Heart right ventricle (tissue), 16 donors: ENCODE measurements at regions of chr16 and their contacts with region 1.

Region 1: DNA sequence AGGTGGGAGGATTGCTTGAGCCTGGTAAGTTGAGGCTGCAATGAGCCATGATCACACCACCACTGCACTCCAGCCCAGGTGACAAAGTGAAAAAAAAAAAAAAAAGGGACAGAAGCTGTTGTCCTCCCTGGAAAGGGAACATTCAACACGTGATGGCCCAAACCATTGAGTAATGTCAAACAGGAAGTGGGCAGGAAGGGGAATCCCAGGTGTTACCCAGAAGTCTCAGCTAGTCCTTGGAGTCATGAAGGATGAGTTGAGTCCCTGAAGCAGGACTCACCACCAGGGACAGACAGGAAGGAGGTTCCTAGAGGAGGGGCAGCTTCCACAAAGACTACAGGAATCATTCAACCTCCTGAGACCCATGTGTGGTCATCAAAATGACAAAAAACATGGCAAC is 19.8 kb upstream of the CMIP start:
- DNase-seq: no peak
- ATAC-seq: no peak
- H3K4me3 ChIP-seq: no peak overlapping the region
- H3K27ac ChIP-seq: no peak overlapping the region
- H3K4me1 ChIP-seq: peaks cover 0 to 16% (median 0%) of the 10 kb centered on the region in 9 donors
- H3K27me3 ChIP-seq: no peaks in the 10 kb centered on the region
- CTCF ChIP-seq: no peak

Region 2: GRCh38 chr16:80718249-80719220 is 706.2 kb before region 1 on chr16:
- intact Hi-C with region 1: no loop called
- DNase-seq: no peak
- ATAC-seq: peak in 2 of 8 donors; percentile 26 to 27
- H3K4me3 ChIP-seq: no peak overlapping the region
- H3K27ac ChIP-seq: no peak overlapping the region
- H3K4me1 ChIP-seq: peaks cover 0 to 11% (median 0%) of the 10 kb centered on the region in 9 donors
- H3K27me3 ChIP-seq: no peaks in the 10 kb centered on the region
- CTCF ChIP-seq: no peak

Region 3: GRCh38 chr16:81390840-81391239 is 33.9 kb before region 1 on chr16:
- intact Hi-C with region 1: loop called in 1 of 10 experiments (anchors 2 kb)
- DNase-seq: no peak
- ATAC-seq: no peak
- H3K4me3 ChIP-seq: no peak overlapping the region
- H3K27ac ChIP-seq: no peak overlapping the region
- H3K4me1 ChIP-seq: peaks cover 2 to 22% (median 10%) of the 10 kb centered on the region in 9 donors
- H3K27me3 ChIP-seq: no peaks in the 10 kb centered on the region
- CTCF ChIP-seq: no peak